ENCODE measurements at regions of chr17 and their contacts with region 1.

Region 1: DNA sequence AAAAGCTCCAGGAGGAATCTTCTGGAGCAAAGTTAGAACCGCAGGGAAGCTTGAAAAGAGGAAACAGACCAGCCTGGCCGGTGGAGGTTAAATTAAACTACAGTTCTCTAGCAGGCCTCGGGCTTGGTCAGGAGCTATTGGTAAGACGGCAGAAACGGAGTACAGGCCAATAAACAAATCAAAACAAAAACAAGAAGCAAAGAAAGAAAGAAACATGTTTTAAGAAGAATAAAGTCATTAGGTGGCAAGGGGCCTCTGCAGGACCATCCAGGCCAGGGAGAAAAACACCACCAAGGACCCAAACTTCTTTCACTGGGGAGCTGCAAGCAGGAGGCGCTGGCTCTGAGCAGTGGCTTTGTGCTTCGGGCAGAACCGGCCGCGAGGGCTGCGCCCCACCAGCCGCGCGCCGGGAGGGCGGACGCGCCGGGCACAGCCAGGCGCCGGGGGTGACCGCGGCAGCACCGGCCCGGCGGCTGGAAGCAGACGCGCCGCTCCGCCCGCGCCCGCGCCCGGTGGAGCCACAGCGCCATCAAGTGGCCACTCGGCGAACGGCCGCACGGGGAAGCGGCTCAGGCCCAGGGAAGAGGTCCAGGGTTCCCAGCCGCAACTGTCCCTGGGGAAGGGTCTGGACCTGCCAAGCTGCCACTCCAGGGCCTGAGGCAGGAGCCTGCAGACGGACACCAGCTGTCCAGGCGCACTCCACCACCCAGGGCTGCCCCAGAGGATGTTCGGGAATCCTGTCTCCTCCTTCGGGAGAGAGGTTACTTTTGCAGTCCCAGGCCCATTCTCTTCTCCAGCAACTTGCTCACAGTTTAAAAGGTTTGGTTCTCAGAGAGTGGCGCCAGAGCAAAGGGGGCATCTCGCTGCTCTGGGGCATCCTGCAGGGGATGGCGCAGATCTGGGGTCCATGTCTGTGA is 419.4 kb downstream of the SOX9 start:
- DNase-seq: peak; percentile 90
- ATAC-seq: peak; percentile 98
- H3K4me3 ChIP-seq: peak overlapping the region; percentile 52
- H3K27ac ChIP-seq: peak overlapping the region; percentile 70
- H3K4me1 ChIP-seq: peaks cover 16% of the 10 kb centered on the region
- H3K27me3 ChIP-seq: no peaks in the 10 kb centered on the region
- CTCF ChIP-seq: peak; percentile 79

Region 2: GRCh38 chr17:70636517-70637133 is 1903.6 kb before region 1 on chr17:
- CTCF ChIA-PET with region 1: no interaction called
- POLR2A ChIA-PET with region 1: no interaction called
- intact Hi-C with region 1: loop called (anchors 5 kb)
- DNase-seq: peak; percentile 80
- ATAC-seq: no peak; the same call in 1 of the 2 replicates
- H3K4me3 ChIP-seq: no peak overlapping the region
- H3K27ac ChIP-seq: no peak overlapping the region
- H3K4me1 ChIP-seq: no peaks in the 10 kb centered on the region
- H3K27me3 ChIP-seq: peaks cover 68% of the 10 kb centered on the region
- CTCF ChIP-seq: peak; percentile 86

Region 3: DNA sequence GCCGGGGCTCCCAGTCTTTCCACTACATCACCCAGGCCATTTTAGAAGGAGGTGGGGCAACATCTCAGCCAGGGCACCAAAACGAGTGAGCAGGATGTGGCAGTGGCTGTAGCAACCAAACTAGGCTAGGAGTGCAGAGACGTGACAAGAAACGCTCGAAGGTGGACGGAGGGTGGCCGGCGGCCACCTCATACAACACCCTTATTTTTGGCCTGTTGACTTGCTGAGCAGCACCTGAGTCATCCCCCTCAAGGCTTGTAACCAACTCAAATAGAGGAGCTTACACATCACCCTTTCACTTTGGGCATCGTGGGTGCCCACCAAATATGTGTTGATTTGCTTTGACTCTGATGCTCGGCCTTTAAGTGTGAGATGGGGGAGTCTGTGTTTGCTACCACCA is 443.1 kb before region 1 on chr17:
- CTCF ChIA-PET with region 1: interaction called, 4 read pairs
- POLR2A ChIA-PET with region 1: no interaction called
- intact Hi-C with region 1: loop called (anchors 1 kb)
- DNase-seq: peak; percentile 99
- ATAC-seq: peak; percentile 98
- H3K4me3 ChIP-seq: peak overlapping the region; percentile 3; the same call in 1 of the 2 replicates
- H3K27ac ChIP-seq: peak overlapping the region; percentile 65
- H3K4me1 ChIP-seq: peaks cover 18% of the 10 kb centered on the region
- H3K27me3 ChIP-seq: no peaks in the 10 kb centered on the region
- CTCF ChIP-seq: no peak

Region 4: DNA sequence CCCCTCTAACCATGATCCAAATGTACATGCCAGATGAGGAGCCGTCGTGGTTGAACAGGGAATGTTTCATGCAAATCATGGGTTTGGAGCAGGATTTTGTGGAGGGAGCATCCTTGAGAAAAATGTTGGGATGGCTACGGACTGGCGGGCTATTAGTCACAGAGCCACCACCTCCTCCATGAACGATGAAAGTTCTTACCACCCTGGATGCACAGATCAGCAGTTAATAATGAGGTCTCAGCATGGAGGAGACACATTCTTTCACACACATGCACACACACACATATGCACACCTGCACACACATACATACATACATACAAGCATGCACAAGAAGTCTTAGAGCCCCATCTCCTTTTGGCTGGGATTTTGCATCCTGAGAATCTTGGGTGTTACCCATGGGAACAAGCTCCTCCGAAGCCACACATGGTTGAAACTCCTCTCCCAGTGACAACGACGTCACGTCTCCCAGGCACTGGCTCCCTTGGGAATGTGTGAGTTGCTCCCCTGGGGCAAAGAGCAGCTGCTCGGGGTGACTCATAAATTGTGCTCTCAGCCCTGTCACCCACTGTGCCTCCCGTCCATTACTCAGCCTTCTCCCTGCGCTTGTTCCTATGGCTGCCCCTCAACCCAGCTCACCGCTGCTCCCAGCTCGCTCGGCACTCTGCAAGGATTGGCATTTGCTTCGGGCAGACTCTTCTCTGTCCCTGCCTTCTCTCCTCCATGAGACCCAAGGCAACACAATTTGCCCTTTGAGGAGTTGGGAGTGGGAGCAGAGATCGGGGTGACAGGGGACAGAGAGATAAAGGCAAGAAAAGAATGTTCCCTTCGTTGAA is 74.8 kb before region 1 on chr17:
- CTCF ChIA-PET with region 1: interaction called, 7 read pairs
- POLR2A ChIA-PET with region 1: interaction called, 5 read pairs
- intact Hi-C with region 1: loop called (anchors 5 kb)
- DNase-seq: peak; percentile 99
- ATAC-seq: peak; percentile 89
- H3K4me3 ChIP-seq: peak overlapping the region; percentile 66
- H3K27ac ChIP-seq: peak overlapping the region; percentile 96
- H3K4me1 ChIP-seq: peaks cover 54% of the 10 kb centered on the region
- H3K27me3 ChIP-seq: no peaks in the 10 kb centered on the region
- CTCF ChIP-seq: no peak

Region 5: DNA sequence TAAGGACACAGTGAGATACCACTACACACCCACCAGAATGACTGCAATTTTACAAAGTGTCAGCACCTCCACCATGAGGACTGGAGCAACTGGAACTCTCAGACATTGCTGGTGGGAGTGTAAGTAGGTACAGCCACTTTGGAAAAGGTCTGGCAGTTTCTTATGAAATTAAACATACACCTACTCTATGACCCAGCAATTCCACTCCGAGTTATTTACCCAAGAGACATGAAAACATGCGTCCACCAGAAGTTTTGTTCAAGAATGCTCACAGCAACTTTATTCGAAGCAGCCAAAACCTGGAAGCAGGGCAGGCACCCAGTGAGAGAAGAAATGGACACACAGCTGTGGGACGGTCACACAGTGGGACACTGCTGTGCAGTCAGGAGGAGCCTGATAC is 35.5 kb before region 1 on chr17:
- CTCF ChIA-PET with region 1: no interaction called
- POLR2A ChIA-PET with region 1: interaction called, 16 read pairs
- intact Hi-C with region 1: no loop called
- DNase-seq: no peak
- ATAC-seq: no peak
- H3K4me3 ChIP-seq: no peak overlapping the region
- H3K27ac ChIP-seq: no peak overlapping the region
- H3K4me1 ChIP-seq: no peaks in the 10 kb centered on the region
- H3K27me3 ChIP-seq: no peaks in the 10 kb centered on the region
- CTCF ChIP-seq: no peak

Region 6: DNA sequence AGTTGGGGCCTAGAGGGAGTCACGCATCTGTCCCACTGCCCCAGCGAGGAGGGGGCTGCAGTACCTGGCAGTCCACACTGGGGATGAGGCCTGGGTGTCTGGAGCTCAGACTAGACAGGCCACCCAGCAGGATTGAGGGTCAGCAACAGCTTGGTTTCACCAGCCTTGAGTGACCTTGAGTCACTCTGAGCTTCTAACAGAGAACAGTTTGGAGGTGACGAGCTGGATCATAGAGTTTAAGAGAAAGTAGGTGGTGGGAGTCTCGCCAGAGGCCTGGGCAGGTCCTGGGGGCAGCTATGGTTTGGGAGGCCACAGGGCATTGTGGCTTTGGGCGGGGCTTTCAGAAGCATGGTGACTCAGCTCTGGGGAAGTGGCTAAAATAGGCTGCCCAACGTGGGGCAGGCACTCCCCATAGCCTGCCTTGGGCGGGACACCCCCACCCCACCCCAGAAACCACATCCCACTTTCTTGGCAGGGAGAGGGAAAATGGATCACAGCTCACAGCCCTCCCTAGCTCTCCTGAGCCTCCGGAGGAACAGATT is 751.1 kb after region 1 on chr17:
- CTCF ChIA-PET with region 1: no interaction called
- POLR2A ChIA-PET with region 1: no interaction called
- intact Hi-C with region 1: no loop called
- DNase-seq: peak; percentile 98
- ATAC-seq: peak; percentile 71
- H3K4me3 ChIP-seq: peak overlapping the region; percentile 42
- H3K27ac ChIP-seq: peak overlapping the region; percentile 95
- H3K4me1 ChIP-seq: peaks cover 84% of the 10 kb centered on the region
- H3K27me3 ChIP-seq: no peaks in the 10 kb centered on the region
- CTCF ChIP-seq: no peak